OCI-LY7 (cell line): ENCODE measurements at regions of chr12 and their contacts with region 1.

Region 1: DNA sequence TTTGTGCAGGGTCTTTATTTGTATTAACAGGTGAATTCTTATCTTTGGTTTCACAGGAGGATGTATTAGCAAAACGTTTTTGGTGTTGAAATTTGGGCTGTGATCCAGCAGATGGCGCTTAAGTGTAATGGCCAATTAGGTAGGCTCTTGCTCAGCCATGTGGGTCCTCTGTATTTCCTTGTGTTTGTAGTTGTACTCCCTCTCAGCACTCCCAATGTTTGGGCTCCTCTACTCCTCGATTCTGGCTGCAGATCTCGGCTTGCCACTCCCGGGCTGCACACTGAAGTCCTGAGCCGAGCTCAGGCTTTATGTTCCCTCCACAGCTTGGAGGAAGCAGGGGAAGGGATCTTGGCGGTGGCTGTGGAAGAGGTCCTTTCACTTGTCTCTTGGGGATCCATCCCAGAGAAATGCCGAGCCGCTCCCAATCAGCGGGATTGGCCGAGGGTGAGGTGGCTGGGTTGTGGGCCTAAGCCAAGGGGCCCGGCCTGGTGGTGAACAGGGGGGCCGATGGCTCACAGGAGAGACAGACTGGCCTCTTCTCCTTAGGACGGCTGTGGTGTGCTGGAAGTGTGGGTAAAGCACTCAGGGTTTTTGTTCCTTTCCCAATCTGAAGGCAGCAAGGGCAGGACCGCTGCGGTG is 133.7 kb downstream of the AEBP2 start:
- DNase-seq: peak; percentile 61
- H3K4me3 ChIP-seq: no peak overlapping the region
- H3K27ac ChIP-seq: no peak overlapping the region
- H3K4me1 ChIP-seq: no peaks in the 10 kb centered on the region
- CTCF ChIP-seq: peak; percentile 86

Region 2: DNA sequence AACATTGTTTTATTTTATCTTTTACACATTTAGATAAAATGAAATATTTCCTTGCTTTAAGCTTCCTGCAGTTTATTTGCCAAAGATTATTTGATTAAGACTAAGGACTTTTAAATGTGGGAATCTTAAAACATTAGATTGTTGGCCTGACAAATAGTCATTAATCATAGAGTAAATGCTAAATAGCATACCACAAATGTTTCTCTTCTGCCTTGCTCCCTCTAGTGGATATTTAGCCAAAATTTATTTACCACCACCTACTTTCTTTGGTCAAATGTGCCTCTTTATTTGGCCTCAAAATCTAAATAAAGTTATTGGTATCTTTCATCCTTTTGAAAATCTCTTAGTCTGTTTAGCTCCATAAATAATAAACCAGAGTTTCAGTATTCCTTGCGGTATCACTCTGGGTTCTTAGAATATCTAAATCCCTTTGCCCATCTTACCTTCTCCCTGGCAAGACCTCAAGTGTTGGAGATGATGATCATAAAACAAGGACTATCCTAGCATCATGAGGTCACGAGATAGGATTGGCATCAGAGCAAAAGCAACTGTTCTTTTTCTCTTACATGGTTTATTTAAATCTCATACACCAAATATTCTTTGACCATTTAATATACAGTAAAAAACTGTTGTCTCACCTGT is 284.3 kb before region 1 on chr12:
- CTCF ChIA-PET with region 1: no interaction called
- POLR2A ChIA-PET with region 1: no interaction called
- intact Hi-C with region 1: loop called (anchors 10 kb)
- DNase-seq: peak; percentile 39
- H3K4me3 ChIP-seq: no peak overlapping the region
- H3K27ac ChIP-seq: no peak overlapping the region
- H3K4me1 ChIP-seq: no peaks in the 10 kb centered on the region
- CTCF ChIP-seq: peak; percentile 87

Region 3: DNA sequence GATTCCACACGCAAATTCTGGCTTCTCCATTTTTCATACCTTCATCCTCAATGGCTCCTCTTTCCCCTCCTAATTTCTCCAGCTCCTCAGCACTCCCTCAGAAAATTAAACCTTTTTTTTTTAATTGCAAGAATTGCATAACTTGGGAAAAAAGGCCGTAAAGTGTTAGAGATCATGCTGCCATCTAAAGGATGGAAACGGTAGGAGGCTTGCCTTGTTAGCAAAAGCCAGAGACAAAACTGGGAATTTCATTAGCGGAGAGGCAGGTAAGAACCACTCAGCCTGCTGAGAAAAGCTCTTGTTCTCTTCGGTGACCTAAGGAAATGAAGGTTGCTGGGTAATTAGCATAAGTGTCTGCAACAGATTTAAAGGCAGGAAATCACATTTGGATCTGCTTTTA is 70.6 kb after region 1 on chr12:
- CTCF ChIA-PET with region 1: no interaction called
- POLR2A ChIA-PET with region 1: no interaction called
- intact Hi-C with region 1: no loop called
- DNase-seq: no peak
- H3K4me3 ChIP-seq: no peak overlapping the region
- H3K27ac ChIP-seq: no peak overlapping the region
- H3K4me1 ChIP-seq: no peaks in the 10 kb centered on the region
- CTCF ChIP-seq: peak; percentile 47; the same call in 1 of the 2 replicates